Activated CD8-positive, alpha-beta T cell treated with anti-CD3 and anti-CD28 coated beads, Interleukin-2, amount 10 ng/mL, durations not matched to agents 7 days and 5 days (primary cell): ENCODE measurements at regions of chr4 and their contacts with region 1.

Region 1: DNA sequence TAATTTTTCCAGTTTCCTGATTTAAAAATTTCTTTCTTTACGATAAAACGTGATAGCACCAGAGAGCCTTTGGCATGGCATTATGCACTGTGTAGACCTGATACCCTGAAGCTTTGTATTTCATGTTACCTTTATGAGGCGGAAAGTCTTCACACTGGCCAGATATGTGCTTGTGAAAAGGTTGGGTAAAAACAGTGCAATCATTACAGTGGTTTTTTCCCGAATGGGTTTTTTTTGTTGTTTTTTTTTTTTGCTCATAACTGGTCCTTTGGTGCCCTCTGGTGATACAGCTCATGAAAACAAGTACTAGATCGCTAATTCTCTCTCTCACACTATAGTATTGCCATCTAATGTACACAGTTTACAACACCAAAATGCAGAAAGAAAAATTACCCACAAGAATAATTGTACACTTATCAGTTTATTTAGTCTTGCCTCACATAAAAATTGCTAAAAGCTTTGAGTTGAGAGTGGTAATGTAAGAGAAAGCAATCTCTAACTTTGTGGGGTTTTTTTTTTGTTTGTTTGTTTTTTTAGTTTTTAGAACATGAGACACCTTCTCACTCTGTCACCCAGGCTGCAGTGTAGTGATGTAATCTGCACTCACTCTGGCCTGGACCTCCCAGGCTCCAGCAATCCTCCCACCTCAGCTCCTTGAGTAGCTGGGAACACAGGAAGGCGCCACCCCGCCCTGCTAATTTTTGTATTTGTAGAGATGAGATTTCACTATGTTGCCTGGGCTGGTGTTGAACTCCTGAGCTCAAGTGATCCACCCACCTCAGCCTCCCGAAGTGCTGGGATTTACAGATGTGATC is 21.3 kb downstream of the SPCS3 start:
- DNase-seq: peak; percentile 28
- ATAC-seq: peak; percentile 33
- H3K4me3 Mint-ChIP-seq: no peak overlapping the region
- H3K27ac Mint-ChIP-seq: no peak overlapping the region
- H3K4me1 Mint-ChIP-seq: no peaks in the 10 kb centered on the region
- H3K27me3 Mint-ChIP-seq: no peaks in the 10 kb centered on the region

Region 2: DNA sequence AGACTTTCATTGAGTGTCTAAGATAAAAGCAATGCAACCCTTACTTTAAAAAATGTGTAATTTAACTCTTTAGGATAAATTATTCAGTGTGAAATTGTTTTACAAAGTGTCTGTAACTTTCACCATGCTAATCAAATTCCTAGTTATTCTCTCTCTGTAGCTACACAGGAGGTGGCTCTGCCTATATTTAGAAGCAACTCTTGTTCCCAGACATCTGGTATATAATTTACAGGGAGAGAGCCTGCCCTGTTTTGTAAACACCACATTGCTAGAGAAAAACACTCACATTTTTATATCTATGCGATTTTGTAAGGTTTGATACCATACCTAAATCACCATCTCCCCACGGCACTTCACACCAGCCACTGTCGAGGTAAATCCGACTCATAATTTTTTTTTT is 110.2 kb before region 1 on chr4:
- CTCF ChIA-PET with region 1: no interaction called
- POLR2A ChIA-PET with region 1: no interaction called
- DNase-seq: no peak
- ATAC-seq: no peak
- H3K4me3 Mint-ChIP-seq: no peak overlapping the region
- H3K27ac Mint-ChIP-seq: no peak overlapping the region
- H3K4me1 Mint-ChIP-seq: no peaks in the 10 kb centered on the region
- H3K27me3 Mint-ChIP-seq: peaks cover 6% of the 10 kb centered on the region

Region 3: GRCh38 chr4:176323511-176324160 is 17.4 kb before region 1 on chr4:
- CTCF ChIA-PET with region 1: interaction called, 19 read pairs
- POLR2A ChIA-PET with region 1: no interaction called
- DNase-seq: no peak
- ATAC-seq: no peak
- H3K4me3 Mint-ChIP-seq: no peak overlapping the region
- H3K27ac Mint-ChIP-seq: no peak overlapping the region
- H3K4me1 Mint-ChIP-seq: peaks cover 39% of the 10 kb centered on the region
- H3K27me3 Mint-ChIP-seq: no peaks in the 10 kb centered on the region